ENCODE measurements at regions of chr2 and their contacts with region 1.

Region 1: DNA sequence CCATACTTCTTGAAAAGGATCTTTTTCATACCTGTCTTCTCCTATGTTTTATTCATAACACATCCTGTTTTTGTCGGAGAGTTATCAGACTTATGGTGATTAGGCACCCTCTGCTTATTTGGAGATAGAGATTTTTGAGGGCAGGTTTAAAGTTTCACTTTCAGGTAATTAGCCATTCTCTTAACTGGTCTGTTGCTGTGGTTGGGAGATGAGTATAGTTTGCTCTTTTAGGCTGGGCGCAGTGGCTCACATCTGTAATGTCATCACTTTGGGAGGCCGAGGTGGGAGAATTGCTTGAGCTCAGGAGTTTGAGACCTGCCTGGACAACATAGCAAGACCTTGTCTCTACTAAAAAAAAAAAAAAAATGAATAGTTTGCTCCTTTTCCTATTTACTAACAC is 25.3 kb downstream of the SFTPB start:
- DNase-seq: no peak
- CTCF ChIP-seq: no peak

Region 2: DNA sequence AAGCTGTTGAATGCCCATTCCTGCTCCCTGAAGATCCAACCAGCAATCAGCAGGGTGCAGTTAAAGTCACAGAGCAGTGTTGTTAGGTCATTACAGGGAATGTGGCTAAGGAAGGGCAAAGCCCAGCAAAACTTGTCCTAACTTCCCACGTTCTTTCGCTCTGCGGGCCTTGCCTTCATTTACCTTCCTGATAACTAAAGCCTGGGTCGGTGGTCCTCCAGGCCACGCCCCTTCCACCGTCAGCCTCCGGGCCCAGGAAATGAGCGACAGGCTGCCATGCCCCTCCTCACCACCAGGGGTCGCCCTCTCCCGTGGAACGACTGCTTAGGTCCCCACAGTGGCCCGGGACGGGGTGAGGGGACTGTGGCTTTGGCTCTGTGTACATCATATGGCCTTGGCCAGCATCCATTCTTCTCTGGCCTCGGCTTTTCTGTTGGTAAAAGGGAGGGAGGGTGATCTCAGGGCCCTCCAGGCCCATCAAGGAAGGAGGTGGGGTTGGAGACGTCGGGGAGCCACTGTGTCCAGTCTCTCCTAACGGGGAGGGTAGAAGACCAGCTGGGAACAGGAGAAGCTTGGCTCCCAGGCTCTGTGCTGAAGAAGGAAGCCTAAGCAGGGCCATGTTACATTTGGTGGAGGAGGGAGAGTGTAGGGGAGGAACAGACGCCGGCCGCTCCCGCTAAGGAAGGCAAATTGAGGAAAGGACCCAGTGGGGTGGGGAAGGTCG is 222.0 kb before region 1 on chr2:
- CTCF ChIA-PET with region 1: interaction called, 10 read pairs
- POLR2A ChIA-PET with region 1: no interaction called
- DNase-seq: peak; percentile 90
- CTCF ChIP-seq: peak; percentile 99

Region 3: DNA sequence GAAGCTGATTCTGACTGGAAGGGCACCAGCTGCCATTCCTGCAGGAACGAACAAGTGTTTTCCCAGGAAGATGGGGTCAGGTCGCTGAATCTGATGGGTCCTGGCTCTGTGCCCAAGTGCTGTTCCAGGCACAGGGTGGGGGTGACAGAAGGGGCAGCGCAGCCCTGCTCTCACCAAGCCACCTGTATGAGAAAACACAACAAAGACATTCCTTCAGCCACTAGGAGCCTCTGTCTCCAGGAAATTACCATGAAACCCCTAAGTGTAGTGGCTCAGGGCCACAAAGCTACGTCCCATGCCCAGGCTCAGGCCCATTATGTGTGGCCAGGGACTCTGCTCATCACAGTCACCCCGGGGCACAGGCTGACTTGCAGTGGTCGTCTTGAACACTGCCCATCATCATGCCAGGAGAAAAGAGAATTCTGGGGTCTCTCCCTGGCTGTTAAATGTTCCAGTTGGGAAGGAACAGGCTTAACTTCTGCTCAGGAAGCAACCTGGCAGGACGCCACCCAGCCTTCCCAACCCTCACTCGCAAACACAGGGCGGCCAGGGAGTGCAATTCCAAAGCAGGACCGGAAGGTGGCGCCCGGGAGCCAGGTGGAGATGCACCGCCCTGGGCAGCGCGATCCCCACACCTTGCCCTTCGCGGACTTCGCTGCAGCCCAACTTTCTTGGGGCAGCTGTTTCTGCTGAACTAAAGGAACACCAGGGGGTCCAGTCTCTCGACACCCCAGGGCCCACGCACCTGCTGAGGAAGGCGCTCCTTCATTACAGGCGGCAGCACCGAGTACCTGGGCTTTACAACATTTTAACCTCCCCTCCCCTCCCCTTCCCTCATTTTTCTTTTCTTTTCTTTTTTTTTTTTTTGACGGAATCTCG is 36.3 kb after region 1 on chr2:
- CTCF ChIA-PET with region 1: interaction called, 16 read pairs
- POLR2A ChIA-PET with region 1: no interaction called
- DNase-seq: peak; percentile 91
- CTCF ChIP-seq: peak; percentile 99

Region 4: DNA sequence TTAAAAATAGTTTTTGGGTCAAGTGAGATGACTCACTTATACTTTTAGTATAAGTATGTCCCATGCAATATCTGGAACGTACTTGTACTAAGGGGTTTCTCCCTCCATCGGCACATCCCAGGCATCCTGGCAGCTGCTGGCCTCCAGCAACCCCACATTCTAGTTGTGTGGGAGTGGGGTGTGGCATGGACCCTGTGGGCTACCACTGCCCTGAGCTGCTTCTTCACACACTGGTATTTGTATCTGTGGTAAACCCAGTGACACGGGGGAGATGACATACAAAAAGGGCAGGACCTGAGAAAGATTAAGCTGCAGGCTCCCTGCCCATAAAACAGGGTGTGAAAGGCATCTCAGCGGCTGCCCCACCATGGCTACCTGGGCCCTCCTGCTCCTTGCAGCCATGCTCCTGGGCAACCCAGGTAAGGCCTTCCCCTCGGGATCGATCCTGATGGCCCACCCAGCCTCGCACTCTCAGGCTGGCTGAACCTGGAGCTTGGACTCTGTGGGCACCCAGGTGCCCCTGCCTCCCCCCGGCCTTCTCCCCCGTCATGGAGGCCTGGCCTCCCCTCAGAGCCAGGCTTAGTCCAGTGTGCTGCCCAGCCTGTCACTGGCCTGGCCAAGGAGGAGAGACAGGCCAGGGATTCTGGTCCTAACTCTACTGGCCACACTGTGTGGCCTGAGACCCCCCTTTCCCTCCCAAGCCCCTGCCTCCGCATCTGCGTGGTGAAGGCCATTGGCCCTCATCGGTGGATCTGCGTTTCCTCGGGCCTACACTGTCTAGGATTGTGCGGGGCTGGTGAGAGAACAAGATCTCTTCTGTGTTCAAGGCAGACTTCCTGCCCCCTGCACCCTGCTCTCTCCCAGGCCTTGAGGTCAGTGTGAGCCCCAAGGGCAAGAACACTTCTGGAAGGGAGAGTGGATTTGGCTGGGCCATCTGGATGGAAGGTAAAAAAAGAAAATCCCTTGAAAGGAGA is 51.6 kb after region 1 on chr2 and contains the start of gene GNLY:
- CTCF ChIA-PET with region 1: interaction called, 16 read pairs
- POLR2A ChIA-PET with region 1: no interaction called
- DNase-seq: no peak
- CTCF ChIP-seq: no peak

Region 5: DNA sequence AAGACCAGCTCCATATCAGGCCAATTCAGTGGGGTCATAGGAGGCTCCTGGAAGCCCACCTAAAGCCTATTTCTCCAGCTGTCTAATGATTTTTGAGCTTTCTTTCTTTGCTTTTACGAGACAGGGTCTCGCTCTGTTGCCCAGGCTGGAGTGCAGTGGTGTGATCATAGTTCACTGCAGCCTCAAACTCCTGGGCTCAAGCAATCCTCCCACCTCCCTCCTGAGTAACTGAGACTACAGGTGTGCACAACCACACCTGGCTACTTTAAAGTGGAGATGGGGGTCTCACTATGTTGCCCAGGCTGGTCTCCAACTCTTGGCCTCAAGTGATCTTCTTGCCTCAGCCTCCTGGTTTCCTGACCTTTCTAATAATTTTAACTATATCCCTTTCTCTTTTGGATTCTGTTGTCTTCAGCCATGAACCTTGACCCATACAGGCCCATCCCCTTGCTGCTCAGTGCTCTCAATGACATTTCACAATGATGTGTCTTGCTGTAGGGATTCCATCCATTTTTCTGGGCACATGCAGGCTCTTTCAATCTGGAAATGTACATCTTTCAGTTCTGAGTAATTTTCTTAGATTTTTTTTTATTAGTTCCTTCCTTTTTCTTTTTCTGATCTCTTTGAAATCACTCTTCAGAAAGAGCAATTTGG is 81.1 kb after region 1 on chr2:
- CTCF ChIA-PET with region 1: interaction called, 13 read pairs
- POLR2A ChIA-PET with region 1: interaction called, 4 read pairs
- DNase-seq: no peak
- CTCF ChIP-seq: no peak